Psoas muscle (tissue), 8 donors: ENCODE measurements at regions of chr15 and their contacts with region 1.

Region 1: GRCh38 chr15:45705510-45706473 is 71.0 kb downstream of the SQOR start:
- DNase-seq: peak; percentile 63 to 73
- ATAC-seq: peak; percentile 74 to 93 (median 82)
- H3K4me3 ChIP-seq: peak overlapping the region; percentile 70
- H3K27ac ChIP-seq: no peak overlapping the region
- H3K4me1 ChIP-seq: peaks cover 6% of the 10 kb centered on the region
- H3K27me3 ChIP-seq: peaks cover 0 to 8% (median 5%) of the 10 kb centered on the region in 3 donors
- CTCF ChIP-seq: peak; percentile 91

Region 2: DNA sequence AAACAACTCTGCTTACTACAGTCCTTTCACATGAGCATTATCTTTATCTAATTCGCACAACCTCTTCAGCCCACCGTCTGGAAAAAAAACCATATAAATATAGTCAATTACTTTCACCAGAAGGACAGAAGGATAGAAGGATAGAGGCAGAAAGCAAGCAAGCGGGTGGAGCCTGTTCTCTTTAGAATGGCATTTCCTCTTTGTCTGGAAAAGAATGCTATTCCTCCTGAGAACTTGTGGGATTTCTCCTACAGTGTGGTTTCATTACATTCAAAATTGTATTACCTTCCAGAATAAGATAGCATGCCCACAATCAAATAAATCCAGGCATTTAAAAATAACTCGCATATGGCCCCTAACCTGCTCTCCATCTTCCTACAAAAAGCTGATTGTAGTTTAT is 206.4 kb before region 1 on chr15:
- intact Hi-C with region 1: no loop called
- DNase-seq: no peak
- ATAC-seq: no peak
- H3K4me3 ChIP-seq: no peak overlapping the region
- H3K27ac ChIP-seq: no peak overlapping the region
- H3K4me1 ChIP-seq: no peaks in the 10 kb centered on the region
- H3K27me3 ChIP-seq: no peaks in the 10 kb centered on the region
- CTCF ChIP-seq: no peak

Region 3: DNA sequence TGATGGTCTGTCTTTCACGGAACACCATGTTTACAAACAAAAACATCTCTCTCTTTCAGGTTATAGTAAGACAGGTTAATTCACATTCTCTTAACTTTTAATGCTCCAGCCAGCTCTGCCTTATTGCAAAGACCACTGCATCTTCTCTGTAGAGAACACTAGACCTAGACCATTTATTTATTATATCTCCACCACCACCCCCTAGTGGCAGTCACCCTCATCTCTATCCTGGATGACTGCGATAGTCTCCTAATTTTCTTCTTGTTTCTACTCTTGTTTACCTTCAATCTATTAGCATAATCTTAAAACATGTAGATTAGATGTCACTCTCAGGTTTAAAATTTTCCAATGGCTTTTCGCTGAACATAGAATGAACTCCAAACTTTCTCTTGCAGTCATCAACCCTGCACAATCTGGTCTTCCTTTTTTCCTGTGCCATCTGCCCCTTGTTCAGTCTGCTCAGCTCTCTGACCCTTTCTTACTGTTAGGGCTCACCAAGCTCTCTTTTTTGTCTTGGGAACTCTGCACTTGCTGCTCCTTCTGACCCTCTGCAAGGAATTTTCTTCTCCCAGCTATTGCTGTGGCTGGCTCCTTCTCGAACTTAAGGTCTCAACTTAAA is 84.6 kb after region 1 on chr15:
- intact Hi-C with region 1: loop called in 1 of 2 experiments (anchors 2 kb)
- DNase-seq: no peak
- ATAC-seq: no peak
- H3K4me3 ChIP-seq: no peak overlapping the region
- H3K27ac ChIP-seq: no peak overlapping the region
- H3K4me1 ChIP-seq: no peaks in the 10 kb centered on the region
- H3K27me3 ChIP-seq: peaks cover 0 to 18% (median 0%) of the 10 kb centered on the region in 3 donors
- CTCF ChIP-seq: peak; percentile 49

Region 4: DNA sequence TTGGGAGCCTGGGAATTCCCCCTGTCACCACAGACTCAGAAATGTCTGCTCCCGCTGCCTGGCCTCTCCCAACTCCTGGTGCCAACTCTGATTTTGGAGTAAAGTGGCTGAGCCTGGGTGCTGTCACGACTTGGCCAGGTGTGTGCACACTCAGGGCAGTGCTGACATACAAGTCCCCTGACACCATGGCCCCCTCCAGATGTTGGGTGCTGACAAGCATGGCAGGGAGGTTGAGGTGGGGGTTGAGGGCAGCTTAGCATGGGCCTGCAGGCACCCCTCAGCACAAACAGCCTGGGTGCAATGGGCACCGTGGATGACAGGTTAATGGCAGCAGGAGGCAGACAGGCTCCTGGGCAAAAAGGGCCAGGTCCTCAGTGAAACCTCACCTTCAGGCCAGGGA is 440.2 kb after region 1 on chr15:
- intact Hi-C with region 1: no loop called
- DNase-seq: no peak
- ATAC-seq: no peak
- H3K4me3 ChIP-seq: no peak overlapping the region
- H3K27ac ChIP-seq: no peak overlapping the region
- H3K4me1 ChIP-seq: no peaks in the 10 kb centered on the region
- H3K27me3 ChIP-seq: no peaks in the 10 kb centered on the region
- CTCF ChIP-seq: no peak